ENCODE measurements at regions of chr12 and their contacts with region 1.

Region 1: GRCh38 chr12:47779301-47779942 is 6.4 kb downstream of the SLC48A1 start:
- DNase-seq: peak; percentile 89
- H3K4me3 ChIP-seq: no peak overlapping the region
- H3K27ac ChIP-seq: no peak overlapping the region
- H3K4me1 ChIP-seq: peaks cover 42% of the 10 kb centered on the region
- CTCF ChIP-seq: peak; percentile 97

Region 2: GRCh38 chr12:47651368-47652254 is 127.8 kb before region 1 on chr12:
- CTCF ChIA-PET with region 1: no interaction called
- POLR2A ChIA-PET with region 1: no interaction called
- intact Hi-C with region 1: loop called (anchors 2 kb)
- DNase-seq: peak; percentile 74
- H3K4me3 ChIP-seq: no peak overlapping the region
- H3K27ac ChIP-seq: no peak overlapping the region
- H3K4me1 ChIP-seq: peaks cover 12% of the 10 kb centered on the region
- CTCF ChIP-seq: peak; percentile 81

Region 3: GRCh38 chr12:47715393-47715876 is 64.0 kb before region 1 on chr12:
- CTCF ChIA-PET with region 1: interaction called, 3 read pairs
- POLR2A ChIA-PET with region 1: no interaction called
- intact Hi-C with region 1: loop called (anchors 1 kb)
- DNase-seq: peak; percentile 91
- H3K4me3 ChIP-seq: no peak overlapping the region
- H3K27ac ChIP-seq: no peak overlapping the region
- H3K4me1 ChIP-seq: peaks cover 20% of the 10 kb centered on the region
- CTCF ChIP-seq: peak; percentile 93

Region 4: DNA sequence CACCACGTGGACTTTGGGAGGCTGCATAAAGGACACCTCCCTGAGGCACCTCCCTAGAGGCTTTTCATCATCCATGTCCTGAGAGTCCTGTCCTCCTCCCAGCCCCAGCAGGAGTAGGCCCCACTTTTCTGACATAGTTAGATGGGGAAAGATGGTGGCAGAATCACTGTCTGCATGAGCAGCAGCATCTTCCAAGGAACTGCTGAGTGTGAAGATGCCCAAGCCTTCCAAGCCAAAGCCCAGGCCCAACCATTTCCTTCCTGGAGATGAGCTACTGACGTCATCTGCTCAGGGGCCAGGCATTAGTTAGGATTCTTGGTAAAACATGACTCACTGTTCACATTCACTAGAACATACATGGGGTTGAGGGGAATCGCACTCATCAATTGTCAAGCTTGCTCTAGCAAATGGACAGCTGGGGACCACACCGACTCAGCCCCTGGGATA is 88.1 kb after region 1 on chr12:
- CTCF ChIA-PET with region 1: no interaction called
- POLR2A ChIA-PET with region 1: no interaction called
- intact Hi-C with region 1: no loop called
- DNase-seq: no peak
- H3K4me3 ChIP-seq: no peak overlapping the region
- H3K27ac ChIP-seq: no peak overlapping the region
- H3K4me1 ChIP-seq: peaks cover 24% of the 10 kb centered on the region
- CTCF ChIP-seq: no peak

Measured in OCI-LY7 (cell line).